ENCODE measurements at regions of chr19 and their contacts with region 1.

Region 1: GRCh38 chr19:45038931-45039893 is at the start of gene CLASRP:
- DNase-seq: peak; percentile 96
- H3K4me3 ChIP-seq: peak within 1 kb of the TSS; percentile 84 to 94 (median 90)
- H3K27ac ChIP-seq: peak within 1 kb of the TSS; percentile 94 to 97 (median 95)
- H3K4me1 ChIP-seq: peaks cover 0 to 39% (median 29%) of the 10 kb centered on the region in 4 donors
- H3K27me3 ChIP-seq: no peaks in the 10 kb centered on the region
- CTCF ChIP-seq: no peak
- EP300 ChIP-seq: no peak
- POLR2A ChIP-seq: peak; percentile 94 to 97
- total RNA-seq, gene CLASRP: 61.9 to 157 (median 73.7) TPM

Region 2: GRCh38 chr19:44869733-44870470 is 169.3 kb before region 1 on chr19:
- intact Hi-C with region 1: no loop called
- DNase-seq: peak; percentile 80
- H3K4me3 ChIP-seq: no peak overlapping the region
- H3K27ac ChIP-seq: peak overlapping the region in 3 of 4 donors; percentile 28 to 66 (median 39)
- H3K4me1 ChIP-seq: no peaks in the 10 kb centered on the region
- H3K27me3 ChIP-seq: no peaks in the 10 kb centered on the region
- CTCF ChIP-seq: no peak
- EP300 ChIP-seq: no peak
- POLR2A ChIP-seq: no peak

Region 3: DNA sequence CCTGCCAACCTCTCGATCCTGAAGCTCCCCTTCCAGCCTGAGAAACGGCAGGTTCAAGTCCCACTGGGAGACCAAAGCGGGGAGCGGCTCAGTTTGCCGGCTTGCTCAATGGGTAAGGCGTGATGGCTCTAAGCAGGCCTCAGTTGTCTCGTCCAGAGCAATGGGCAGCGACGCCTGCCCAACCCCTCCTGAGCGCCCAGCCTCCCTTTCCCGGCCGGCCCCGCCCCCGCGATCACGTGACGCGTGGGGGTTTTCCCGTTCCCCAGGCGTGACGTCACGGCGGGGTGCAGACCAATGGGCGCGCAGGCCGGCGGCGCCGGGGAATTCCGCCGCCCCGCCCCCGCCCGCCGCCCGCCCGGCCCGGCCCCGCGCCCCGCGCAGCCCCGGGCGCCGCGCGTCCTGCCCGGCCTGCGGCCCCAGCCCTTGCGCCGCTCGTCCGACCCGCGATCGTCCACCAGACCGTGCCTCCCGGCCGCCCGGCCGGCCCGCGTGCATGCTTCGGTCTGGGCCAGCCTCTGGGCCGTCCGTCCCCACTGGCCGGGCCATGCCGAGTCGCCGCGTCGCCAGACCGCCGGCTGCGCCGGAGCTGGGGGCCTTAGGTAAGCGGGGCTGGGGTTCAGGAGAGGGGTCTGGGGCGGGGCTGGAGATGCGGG is 38.0 kb before region 1 on chr19 and contains the start of gene RELB:
- intact Hi-C with region 1: loop called (anchors 2 kb)
- DNase-seq: peak; percentile 98
- H3K4me3 ChIP-seq: peak within 1 kb of the TSS; percentile 86 to 91 (median 88)
- H3K27ac ChIP-seq: peak within 1 kb of the TSS; percentile 100
- H3K4me1 ChIP-seq: peaks cover 0 to 15% (median 13%) of the 10 kb centered on the region in 4 donors
- H3K27me3 ChIP-seq: no peaks in the 10 kb centered on the region
- CTCF ChIP-seq: no peak
- EP300 ChIP-seq: peak in 2 of 4 donors; percentile 33 to 56
- POLR2A ChIP-seq: no peak
- total RNA-seq, gene RELB: 3.2 to 16.7 (median 4.1) TPM

Region 4: GRCh38 chr19:45079063-45079910 is 40.1 kb after region 1 on chr19 and contains the start of gene GEMIN7:
- intact Hi-C with region 1: loop called (anchors 5 kb)
- DNase-seq: peak; percentile 87
- H3K4me3 ChIP-seq: peak within 1 kb of the TSS; percentile 71 to 91 (median 86)
- H3K27ac ChIP-seq: peak within 1 kb of the TSS; percentile 73 to 80 (median 78)
- H3K4me1 ChIP-seq: peaks cover 0 to 41% (median 35%) of the 10 kb centered on the region in 4 donors
- H3K27me3 ChIP-seq: no peaks in the 10 kb centered on the region
- CTCF ChIP-seq: peak in 1 of 4 experiments; percentile 10
- EP300 ChIP-seq: no peak
- POLR2A ChIP-seq: no peak
- total RNA-seq, gene GEMIN7: 10.3 to 18.2 (median 16.2) TPM

Region 5: GRCh38 chr19:45092747-45093678 is 53.8 kb after region 1 on chr19 and contains the start of gene PPP1R37:
- intact Hi-C with region 1: loop called (anchors 5 kb)
- DNase-seq: peak; percentile 96
- H3K4me3 ChIP-seq: peak within 1 kb of the TSS; percentile 84 to 99 (median 90)
- H3K27ac ChIP-seq: peak within 1 kb of the TSS; percentile 84 to 90 (median 86)
- H3K4me1 ChIP-seq: peaks cover 0 to 67% (median 57%) of the 10 kb centered on the region in 4 donors
- H3K27me3 ChIP-seq: no peaks in the 10 kb centered on the region
- CTCF ChIP-seq: peak in 3 of 4 experiments; percentile 36 to 48 (median 43)
- EP300 ChIP-seq: peak in 1 of 4 donors; percentile 40
- POLR2A ChIP-seq: peak in 1 of 2 donors; percentile 5
- total RNA-seq, gene PPP1R37: 17.8 to 23.2 (median 19.9) TPM

Region 6: GRCh38 chr19:45123430-45123850 is 84.2 kb after region 1 on chr19:
- intact Hi-C with region 1: no loop called
- DNase-seq: no peak
- H3K4me3 ChIP-seq: no peak overlapping the region
- H3K27ac ChIP-seq: no peak overlapping the region
- H3K4me1 ChIP-seq: peaks cover 0 to under 1% (median 0%) of the 10 kb centered on the region in 4 donors
- H3K27me3 ChIP-seq: no peaks in the 10 kb centered on the region
- CTCF ChIP-seq: no peak
- EP300 ChIP-seq: no peak
- POLR2A ChIP-seq: no peak